PC-3 (cell line): ENCODE measurements at regions of chr7 and their contacts with region 1.

Region 1: DNA sequence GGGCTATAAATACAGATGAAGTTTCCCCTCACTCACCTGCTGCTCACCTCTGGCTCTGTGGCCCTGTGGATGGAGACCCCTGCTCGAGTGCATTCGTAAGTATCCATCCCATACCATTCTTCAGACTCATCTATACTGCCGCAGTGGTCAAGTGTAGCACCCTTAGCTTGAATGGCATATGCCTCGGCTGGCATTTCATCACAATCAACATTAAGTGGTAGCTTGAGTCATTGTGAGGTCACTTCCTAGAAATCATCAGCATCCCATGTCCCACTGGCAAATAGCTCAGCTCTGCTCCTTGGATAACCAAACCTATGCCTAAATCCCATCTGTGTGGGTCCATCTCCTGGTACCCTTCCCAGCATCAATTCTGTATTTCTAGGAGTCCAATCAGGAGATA is 38.2 kb downstream of the MDH2 start:
- DNase-seq: peak; percentile 71
- ATAC-seq: no peak
- H3K4me3 ChIP-seq: no peak overlapping the region
- H3K27ac ChIP-seq: peak overlapping the region; percentile 96
- H3K4me1 ChIP-seq: peaks cover 65% of the 10 kb centered on the region
- H3K27me3 ChIP-seq: no peaks in the 10 kb centered on the region
- CTCF ChIP-seq: no peak

Region 2: DNA sequence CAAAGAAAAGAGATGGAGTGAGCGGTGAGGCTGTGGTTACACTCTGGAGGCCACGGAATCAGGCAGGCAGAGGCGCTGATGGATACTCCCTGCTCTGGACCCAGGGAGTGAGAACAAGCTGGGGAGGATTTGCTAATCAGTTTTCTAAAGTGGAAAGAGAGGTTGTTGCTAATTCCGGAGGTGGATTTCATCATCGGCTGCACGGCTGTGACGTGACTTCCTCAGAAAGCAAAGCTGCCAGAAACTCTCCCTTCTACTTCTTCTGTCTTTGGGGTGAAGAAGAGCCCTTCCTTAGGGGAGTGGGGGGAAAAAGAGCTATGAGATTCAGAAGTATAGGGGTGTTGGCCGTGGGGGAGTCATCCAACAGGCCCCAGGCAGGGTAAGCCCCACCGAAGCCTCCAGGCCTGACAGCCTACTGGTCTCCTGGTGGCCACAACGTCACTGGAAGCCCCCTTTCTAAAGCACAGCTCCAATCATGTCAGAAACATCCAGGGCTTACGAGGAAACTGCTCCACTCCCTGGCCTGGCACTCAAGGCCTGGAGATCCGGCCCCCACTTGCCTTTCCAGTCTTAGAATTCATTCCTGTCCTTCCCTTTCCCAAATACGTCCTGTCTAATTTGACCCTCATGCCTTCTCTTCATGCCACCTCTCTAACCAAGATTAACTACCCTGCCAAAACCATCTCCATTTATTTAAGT is 461.8 kb before region 1 on chr7:
- CTCF ChIA-PET with region 1: no interaction called
- POLR2A ChIA-PET with region 1: no interaction called
- intact Hi-C with region 1: no loop called
- DNase-seq: no peak
- ATAC-seq: no peak
- H3K4me3 ChIP-seq: no peak overlapping the region
- H3K27ac ChIP-seq: no peak overlapping the region
- H3K4me1 ChIP-seq: no peaks in the 10 kb centered on the region
- H3K27me3 ChIP-seq: no peaks in the 10 kb centered on the region
- CTCF ChIP-seq: no peak

Region 3: DNA sequence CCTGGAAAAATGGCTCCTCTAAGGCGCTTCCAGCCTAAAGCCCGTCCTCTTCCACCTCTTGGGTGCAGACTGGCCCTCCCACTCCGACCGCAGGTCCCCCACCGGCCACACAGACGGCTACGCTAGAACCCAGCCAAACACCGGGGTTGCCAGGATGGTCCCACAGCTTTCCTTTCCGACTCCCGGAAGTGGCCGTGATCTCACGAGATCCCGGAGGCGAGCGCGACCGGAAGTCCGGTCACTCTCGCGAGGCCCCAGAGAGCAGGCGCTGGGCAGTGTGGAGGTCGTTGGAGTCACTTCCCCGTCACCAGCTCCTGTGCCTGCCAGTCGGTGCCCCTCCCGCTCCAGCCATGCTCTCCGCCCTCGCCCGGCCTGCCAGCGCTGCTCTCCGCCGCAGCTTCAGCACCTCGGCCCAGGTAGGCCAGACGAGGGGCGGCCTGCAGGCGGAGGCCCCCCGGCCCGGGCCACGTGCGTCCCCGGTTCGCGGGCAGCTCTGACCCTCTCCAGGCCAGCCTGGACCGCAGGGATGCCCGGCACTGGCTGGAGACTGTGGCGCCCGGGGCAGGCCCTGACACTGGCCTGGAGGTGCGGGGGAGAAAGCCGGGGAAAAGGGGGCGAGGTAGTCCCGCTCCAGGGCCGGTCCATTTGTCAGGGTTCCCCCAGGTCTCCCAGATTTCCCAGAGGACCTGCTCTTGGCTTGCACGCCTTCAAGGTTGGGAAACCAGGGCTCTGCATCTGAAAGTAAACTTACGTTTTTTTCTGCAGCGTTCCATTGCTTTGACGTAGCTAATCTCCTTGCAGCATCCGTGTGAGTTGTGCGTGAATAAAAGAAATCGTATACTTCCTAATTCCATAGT is 38.0 kb before region 1 on chr7 and contains the starts of genes MDH2 and STYXL1:
- CTCF ChIA-PET with region 1: no interaction called
- POLR2A ChIA-PET with region 1: interaction called, 5 read pairs
- intact Hi-C with region 1: loop called (anchors 1 kb)
- DNase-seq: peak; percentile 97
- ATAC-seq: peak; percentile 95
- H3K4me3 ChIP-seq: peak within 1 kb of the TSS; percentile 92
- H3K27ac ChIP-seq: peak within 1 kb of the TSS; percentile 81
- H3K4me1 ChIP-seq: peaks cover 25% of the 10 kb centered on the region
- H3K27me3 ChIP-seq: no peaks in the 10 kb centered on the region
- CTCF ChIP-seq: no peak
- total RNA-seq, gene MDH2: 163 and 174 TPM in 2 replicates
- total RNA-seq, gene STYXL1: 57.4 and 61.3 TPM in 2 replicates

Region 4: DNA sequence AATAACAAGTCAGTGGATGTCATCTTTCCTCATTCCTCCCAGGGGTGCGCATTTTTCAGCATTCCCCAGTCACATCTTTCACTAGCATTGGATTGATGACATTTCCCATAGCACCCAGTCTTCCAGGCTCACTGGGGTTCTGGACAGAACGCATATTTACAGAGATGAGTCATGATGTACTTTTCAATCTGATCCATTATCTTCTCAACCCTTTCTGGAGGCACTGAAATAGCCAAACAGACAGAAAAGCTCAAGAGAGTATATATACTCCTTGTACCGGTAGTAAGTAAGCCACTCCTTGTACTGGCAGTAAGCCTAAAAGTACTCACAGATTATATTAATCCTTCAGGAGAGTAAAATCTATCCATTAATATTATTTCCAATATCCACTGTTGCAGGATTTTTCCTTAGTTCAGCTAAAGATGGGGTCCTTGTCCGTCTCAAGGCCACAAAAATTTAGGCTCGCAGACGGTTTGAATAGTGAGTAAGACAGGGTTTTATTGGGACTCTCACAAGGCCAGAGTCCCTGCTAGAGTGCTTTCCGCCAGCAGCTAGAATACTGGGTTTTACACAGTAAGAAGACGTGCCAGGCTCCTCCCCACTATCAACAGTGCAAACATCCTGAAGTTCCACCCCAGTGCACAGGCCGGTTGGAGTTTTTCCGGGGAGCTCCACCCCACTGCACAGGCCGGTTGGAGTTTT is 22.6 kb after region 1 on chr7:
- CTCF ChIA-PET with region 1: interaction called, 3 read pairs
- POLR2A ChIA-PET with region 1: no interaction called
- intact Hi-C with region 1: loop called (anchors 1 kb)
- DNase-seq: peak; percentile 90
- ATAC-seq: peak; percentile 91
- H3K4me3 ChIP-seq: peak overlapping the region; percentile 60
- H3K27ac ChIP-seq: peak overlapping the region; percentile 98
- H3K4me1 ChIP-seq: peaks cover 40% of the 10 kb centered on the region
- H3K27me3 ChIP-seq: no peaks in the 10 kb centered on the region
- CTCF ChIP-seq: no peak

Region 5: DNA sequence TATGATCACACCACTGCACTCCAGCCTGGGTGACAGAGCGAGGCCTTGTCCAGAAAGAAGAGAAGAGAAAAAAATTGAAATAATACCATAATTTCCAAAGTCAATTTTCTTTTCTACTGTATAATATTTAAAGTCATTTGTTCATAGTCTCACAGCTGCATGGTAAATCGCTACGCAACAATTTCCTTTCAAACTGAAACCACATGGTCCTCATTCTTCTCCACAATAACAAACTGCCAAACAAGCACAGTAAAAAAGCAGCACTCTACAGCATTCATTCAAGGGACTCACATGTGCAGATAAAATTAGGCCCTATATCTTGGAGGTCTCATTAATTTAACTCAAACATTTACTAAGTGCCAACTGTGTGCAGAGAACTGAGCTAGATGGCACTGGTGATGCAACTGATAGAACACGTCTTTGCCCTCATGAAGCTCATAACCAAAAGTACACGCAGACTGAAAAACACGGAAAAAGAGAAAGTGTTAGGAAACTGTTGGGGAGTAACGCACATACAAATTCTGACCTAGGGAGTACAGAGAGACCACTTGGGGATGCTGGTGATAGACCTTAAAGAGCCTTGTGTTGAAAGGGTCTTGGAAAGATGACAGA is 47.2 kb after region 1 on chr7:
- CTCF ChIA-PET with region 1: no interaction called
- POLR2A ChIA-PET with region 1: no interaction called
- intact Hi-C with region 1: loop called (anchors 5 kb)
- DNase-seq: no peak
- ATAC-seq: no peak
- H3K4me3 ChIP-seq: no peak overlapping the region
- H3K27ac ChIP-seq: no peak overlapping the region
- H3K4me1 ChIP-seq: no peaks in the 10 kb centered on the region
- H3K27me3 ChIP-seq: no peaks in the 10 kb centered on the region
- CTCF ChIP-seq: no peak